Mammary epithelial cell (primary cell): ENCODE measurements at regions of chr15 and their contacts with region 1.

Region 1: GRCh38 chr15:64067564-64068030 is 21.3 kb upstream of the DAPK2 start:
- DNase-seq: peak; percentile 39
- H3K4me3 ChIP-seq: no peak overlapping the region
- H3K27ac ChIP-seq: no peak overlapping the region
- H3K4me1 ChIP-seq: no peaks in the 10 kb centered on the region
- H3K27me3 ChIP-seq: no peaks in the 10 kb centered on the region
- CTCF ChIP-seq: peak; percentile 59 to 82

Region 2: GRCh38 chr15:63288778-63289378 is 778.7 kb before region 1 on chr15:
- CTCF ChIA-PET with region 1: no interaction called
- dilution Hi-C with region 1: no loop called
- in situ Hi-C with region 1: no loop called
- intact Hi-C with region 1: loop called (anchors 5 kb)
- DNase-seq: peak; percentile 36
- H3K4me3 ChIP-seq: no peak overlapping the region
- H3K27ac ChIP-seq: no peak overlapping the region
- H3K4me1 ChIP-seq: peaks cover 6% of the 10 kb centered on the region
- H3K27me3 ChIP-seq: no peaks in the 10 kb centered on the region
- CTCF ChIP-seq: peak; percentile 59 to 72

Region 3: DNA sequence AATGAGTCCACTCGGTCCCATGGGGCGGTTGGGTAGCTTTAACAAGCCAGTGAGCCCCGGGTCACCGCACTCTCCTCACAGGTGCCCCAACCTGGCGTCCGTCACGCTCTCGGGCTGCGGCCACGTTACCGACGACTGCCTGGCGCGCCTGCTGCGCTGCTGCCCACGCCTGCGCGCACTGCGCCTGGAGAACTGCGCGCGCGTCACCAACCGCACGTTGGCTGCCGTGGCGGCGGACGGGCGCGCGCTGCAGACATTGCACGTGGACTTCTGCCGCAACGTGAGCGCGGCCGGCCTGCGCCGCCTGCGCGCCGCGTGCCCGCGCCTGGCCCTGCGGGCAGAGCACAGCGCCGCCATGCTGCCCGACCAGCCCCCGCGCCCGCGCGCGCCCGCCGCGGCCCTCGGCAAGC is 467.0 kb before region 1 on chr15:
- CTCF ChIA-PET with region 1: interaction called, 3 read pairs
- dilution Hi-C with region 1: no loop called
- in situ Hi-C with region 1: loop called in 1 of 2 experiments (anchors 25 kb)
- intact Hi-C with region 1: no loop called
- DNase-seq: peak; percentile 88
- H3K4me3 ChIP-seq: peak overlapping the region; percentile 64 to 76 (median 72)
- H3K27ac ChIP-seq: peak overlapping the region; percentile 38
- H3K4me1 ChIP-seq: peaks cover 32% of the 10 kb centered on the region
- H3K27me3 ChIP-seq: no peaks in the 10 kb centered on the region
- CTCF ChIP-seq: no peak

Region 4: GRCh38 chr15:63752075-63752684 is 315.4 kb before region 1 on chr15:
- CTCF ChIA-PET with region 1: interaction called, 6 read pairs
- dilution Hi-C with region 1: no loop called
- in situ Hi-C with region 1: loop called (anchors 10 kb)
- intact Hi-C with region 1: loop called (anchors 1 kb)
- DNase-seq: peak; percentile 40
- H3K4me3 ChIP-seq: no peak overlapping the region
- H3K27ac ChIP-seq: no peak overlapping the region
- H3K4me1 ChIP-seq: no peaks in the 10 kb centered on the region
- H3K27me3 ChIP-seq: no peaks in the 10 kb centered on the region
- CTCF ChIP-seq: peak; percentile 80 to 83

Region 5: GRCh38 chr15:63891079-63891767 is 176.4 kb before region 1 on chr15:
- CTCF ChIA-PET with region 1: no interaction called
- dilution Hi-C with region 1: no loop called
- in situ Hi-C with region 1: no loop called
- intact Hi-C with region 1: loop called (anchors 1 kb)
- DNase-seq: peak; percentile 60
- H3K4me3 ChIP-seq: no peak overlapping the region
- H3K27ac ChIP-seq: no peak overlapping the region
- H3K4me1 ChIP-seq: peaks cover 2% of the 10 kb centered on the region
- H3K27me3 ChIP-seq: no peaks in the 10 kb centered on the region
- CTCF ChIP-seq: peak; percentile 74 to 86

Region 6: GRCh38 chr15:63983061-63983711 is 84.4 kb before region 1 on chr15:
- CTCF ChIA-PET with region 1: interaction called, 10 read pairs
- dilution Hi-C with region 1: no loop called
- in situ Hi-C with region 1: no loop called
- intact Hi-C with region 1: no loop called
- DNase-seq: no peak
- H3K4me3 ChIP-seq: no peak overlapping the region
- H3K27ac ChIP-seq: no peak overlapping the region
- H3K4me1 ChIP-seq: peaks cover 12% of the 10 kb centered on the region
- H3K27me3 ChIP-seq: no peaks in the 10 kb centered on the region
- CTCF ChIP-seq: no peak

Region 7: GRCh38 chr15:64046347-64047153 is 21.0 kb before region 1 on chr15 and contains the start of gene DAPK2:
- CTCF ChIA-PET with region 1: no interaction called
- dilution Hi-C with region 1: no loop called
- in situ Hi-C with region 1: no loop called
- intact Hi-C with region 1: loop called (anchors 2 kb)
- DNase-seq: peak; percentile 56
- H3K4me3 ChIP-seq: peak within 1 kb of the TSS; percentile 26 to 64 (median 54)
- H3K27ac ChIP-seq: no peak within 1 kb of the TSS
- H3K4me1 ChIP-seq: peaks cover 8% of the 10 kb centered on the region
- H3K27me3 ChIP-seq: peaks cover 2% of the 10 kb centered on the region
- CTCF ChIP-seq: peak; percentile 27 to 73
- total RNA-seq, gene DAPK2: 0.82 to 2.3 TPM

Region 8: GRCh38 chr15:64089543-64090280 is 22.1 kb after region 1 on chr15:
- CTCF ChIA-PET with region 1: no interaction called
- dilution Hi-C with region 1: no loop called
- in situ Hi-C with region 1: no loop called
- intact Hi-C with region 1: no loop called
- DNase-seq: no peak
- H3K4me3 ChIP-seq: no peak overlapping the region
- H3K27ac ChIP-seq: no peak overlapping the region
- H3K4me1 ChIP-seq: peaks cover 8% of the 10 kb centered on the region
- H3K27me3 ChIP-seq: no peaks in the 10 kb centered on the region
- CTCF ChIP-seq: no peak

Region 9: DNA sequence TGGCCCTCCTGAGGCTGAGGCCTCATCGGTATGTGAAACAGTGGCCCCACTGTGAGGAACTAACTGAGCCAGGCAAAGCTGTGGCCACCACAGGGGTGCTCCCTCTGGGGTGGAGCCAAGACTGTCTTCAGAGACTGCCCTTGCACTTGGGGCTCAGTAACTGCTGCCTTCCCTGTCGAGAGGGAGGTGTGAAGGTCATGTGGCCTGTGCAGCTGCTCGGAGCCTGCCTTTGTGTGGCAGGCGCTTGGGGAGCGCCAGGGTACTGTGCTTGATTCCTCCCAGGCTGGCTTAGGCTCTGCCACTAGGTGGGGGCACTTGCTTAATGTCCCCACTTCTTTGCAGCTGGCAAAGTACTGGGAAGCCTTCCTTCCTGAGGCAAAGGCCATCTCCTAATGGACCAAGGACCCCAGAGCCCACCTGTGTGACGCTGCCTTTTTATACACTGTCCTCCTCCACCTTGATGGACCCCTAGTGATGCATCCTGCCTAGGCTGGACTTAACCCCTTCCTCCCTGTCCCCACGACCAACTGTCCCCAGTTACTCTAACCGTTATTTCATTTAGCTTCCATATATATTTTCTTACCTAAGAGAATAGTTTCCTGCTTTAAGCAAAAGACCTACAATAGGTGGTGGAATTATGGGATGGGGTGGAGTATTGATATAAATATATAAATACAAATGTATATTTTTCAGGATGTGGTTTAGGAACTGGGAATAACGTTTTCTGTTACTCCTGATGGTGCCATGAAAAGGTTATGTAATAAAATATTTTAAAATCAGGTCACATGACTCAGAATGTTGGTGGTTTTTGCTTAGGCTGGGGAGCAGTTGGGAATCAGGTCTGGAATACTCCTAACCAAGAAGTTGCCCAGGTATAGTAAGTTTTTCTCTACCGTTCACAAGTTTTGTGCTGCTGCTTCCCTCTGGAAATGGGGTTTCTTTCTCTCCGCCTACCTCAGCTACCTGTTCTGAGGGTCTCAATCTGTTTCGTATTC is 69.9 kb after region 1 on chr15:
- CTCF ChIA-PET with region 1: no interaction called
- dilution Hi-C with region 1: no loop called
- in situ Hi-C with region 1: no loop called
- intact Hi-C with region 1: no loop called
- DNase-seq: no peak
- H3K4me3 ChIP-seq: no peak overlapping the region
- H3K27ac ChIP-seq: no peak overlapping the region
- H3K4me1 ChIP-seq: no peaks in the 10 kb centered on the region
- H3K27me3 ChIP-seq: no peaks in the 10 kb centered on the region
- CTCF ChIP-seq: no peak